Naive thymus-derived CD4-positive, alpha-beta T cell (primary cell): ENCODE measurements at regions of chr1 and their contacts with region 1.

Region 1: DNA sequence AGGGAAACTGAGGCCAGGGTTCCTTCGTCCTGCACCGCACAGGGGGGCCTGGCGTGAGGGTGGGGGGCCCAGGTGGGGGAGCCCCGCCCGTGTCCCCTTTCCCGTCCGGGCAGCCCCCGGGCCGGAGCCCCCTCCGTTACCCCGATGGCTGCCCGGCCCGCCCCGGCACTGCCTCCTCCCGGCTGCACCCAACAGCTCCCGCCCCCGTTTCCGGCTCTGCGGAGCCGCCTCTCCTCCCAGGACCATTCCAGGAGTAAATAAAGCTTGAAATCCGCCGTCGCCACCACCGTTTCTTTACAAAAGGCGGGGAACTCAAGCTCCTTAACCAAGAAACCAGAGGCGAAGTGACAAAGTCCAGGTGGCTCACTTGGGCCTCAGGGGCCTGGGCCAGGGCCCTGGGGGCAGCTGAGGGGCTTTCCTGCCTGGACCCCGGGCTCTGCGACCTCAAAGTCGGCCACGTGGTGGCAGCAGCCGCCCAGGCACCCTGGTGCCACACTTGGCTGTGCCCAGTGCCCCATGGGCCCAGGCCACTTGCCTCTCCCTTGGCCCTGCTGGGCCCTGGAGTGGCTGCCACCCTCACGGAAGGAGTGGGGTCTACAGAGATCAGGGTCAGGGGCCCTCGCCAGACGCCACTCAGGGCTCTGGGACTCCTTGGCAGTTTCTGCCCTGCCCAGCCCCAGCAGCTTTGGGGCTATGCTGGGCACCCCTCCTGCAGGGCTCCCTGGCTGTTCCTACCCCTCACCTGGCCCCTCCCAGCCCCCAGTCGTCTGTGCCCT is 514 bp upstream of the FAAP20 start:
- DNase-seq: peak; percentile 85 to 98 (median 95)
- ATAC-seq: peak; percentile 85
- H3K4me3 ChIP-seq: peak overlapping the region; percentile 89
- H3K4me3 Mint-ChIP-seq: peak overlapping the region; percentile 71 to 91 (median 86)
- H3K27ac ChIP-seq: peak overlapping the region; percentile 88
- H3K27ac Mint-ChIP-seq: peak overlapping the region; percentile 52 to 94 (median 92)
- H3K4me1 ChIP-seq: peaks cover 22 to 33% of the 10 kb centered on the region in 2 donors
- H3K4me1 Mint-ChIP-seq: peaks cover 15 to 34% (median 26%) of the 10 kb centered on the region in 7 donors
- H3K27me3 ChIP-seq: no peaks in the 10 kb centered on the region
- H3K27me3 Mint-ChIP-seq: no peaks in the 10 kb centered on the region

Region 2: GRCh38 chr1:2133039-2133878 is 61.8 kb before region 1 on chr1:
- CTCF ChIA-PET with region 1: no interaction called
- POLR2A ChIA-PET with region 1: interaction called, 3 read pairs
- intact Hi-C with region 1: loop called in 1 of 2 experiments (anchors 1 kb)
- DNase-seq: peak; percentile 93 to 97 (median 96)
- ATAC-seq: peak; percentile 94
- H3K4me3 ChIP-seq: peak overlapping the region; percentile 66
- H3K4me3 Mint-ChIP-seq: peak overlapping the region; percentile 73 to 88 (median 83)
- H3K27ac ChIP-seq: peak overlapping the region; percentile 80
- H3K27ac Mint-ChIP-seq: peak overlapping the region; percentile 54 to 96 (median 93)
- H3K4me1 ChIP-seq: peaks cover 10% of the 10 kb centered on the region in 2 donors
- H3K4me1 Mint-ChIP-seq: peaks cover 5 to 32% (median 17%) of the 10 kb centered on the region in 7 donors
- H3K27me3 ChIP-seq: no peaks in the 10 kb centered on the region
- H3K27me3 Mint-ChIP-seq: no peaks in the 10 kb centered on the region

Region 3: GRCh38 chr1:2233997-2234761 is 39.1 kb after region 1 on chr1:
- CTCF ChIA-PET with region 1: interaction called, 5 read pairs
- POLR2A ChIA-PET with region 1: interaction called, 47 read pairs
- intact Hi-C with region 1: loop called in 1 of 2 experiments (anchors 1 kb)
- DNase-seq: peak; percentile 52 to 82 (median 72)
- ATAC-seq: peak; percentile 80
- H3K4me3 ChIP-seq: peak overlapping the region; percentile 83
- H3K4me3 Mint-ChIP-seq: peak overlapping the region; percentile 89 to 100 (median 94)
- H3K27ac ChIP-seq: peak overlapping the region; percentile 78
- H3K27ac Mint-ChIP-seq: peak overlapping the region; percentile 90 to 99 (median 97)
- H3K4me1 ChIP-seq: peaks cover 64 to 78% of the 10 kb centered on the region in 2 donors
- H3K4me1 Mint-ChIP-seq: peaks cover 50 to 70% (median 61%) of the 10 kb centered on the region in 7 donors
- H3K27me3 ChIP-seq: no peaks in the 10 kb centered on the region
- H3K27me3 Mint-ChIP-seq: no peaks in the 10 kb centered on the region

Region 4: DNA sequence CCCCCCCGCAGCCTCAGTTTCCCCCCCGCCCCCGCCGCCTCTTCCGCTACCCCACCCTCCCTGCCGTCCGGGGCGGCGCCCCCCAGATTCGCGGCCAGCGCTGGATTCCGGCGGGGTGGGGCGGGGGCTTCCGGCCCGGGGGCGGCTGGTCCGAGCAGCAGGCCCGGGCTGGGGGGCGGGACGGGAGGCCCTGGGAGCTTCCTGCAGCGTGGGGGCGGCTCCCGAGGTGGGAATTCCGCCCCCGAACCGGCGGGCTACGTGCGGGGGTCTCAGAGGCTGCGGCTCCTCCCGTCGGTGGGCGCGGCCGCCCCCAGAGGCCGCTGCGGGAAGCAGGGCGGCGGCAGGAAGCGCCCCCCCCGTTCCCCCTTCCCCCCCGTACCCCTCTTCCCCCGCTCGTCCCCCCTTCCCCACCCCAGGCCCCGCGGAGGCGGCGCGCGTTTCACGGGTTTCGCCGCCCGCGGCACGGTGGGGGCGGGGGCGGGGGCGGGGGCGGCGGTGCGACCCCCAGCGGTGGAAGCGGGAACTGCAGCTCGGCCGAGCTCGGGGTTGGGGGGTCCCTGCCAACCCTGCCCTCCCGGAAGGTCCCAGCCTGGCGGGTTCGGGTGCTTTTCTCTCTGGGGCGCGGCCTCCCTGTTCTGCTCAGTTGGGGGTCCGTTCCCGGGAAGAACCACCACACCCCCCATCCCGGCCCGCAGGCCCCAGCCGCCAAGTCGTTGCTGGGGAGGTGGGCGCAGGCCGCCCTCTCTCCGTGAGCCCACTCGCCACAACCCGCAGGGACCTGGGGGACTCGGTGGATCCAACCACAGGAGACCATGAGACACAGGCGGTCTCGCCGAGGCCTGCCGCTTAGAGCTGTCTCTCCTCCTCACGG is 120.0 kb after region 1 on chr1:
- CTCF ChIA-PET with region 1: interaction called, 20 read pairs
- POLR2A ChIA-PET with region 1: interaction called, 11 read pairs
- intact Hi-C with region 1: loop called in 1 of 2 experiments (anchors 1 kb)
- DNase-seq: peak; percentile 56 to 77 (median 70)
- ATAC-seq: peak; percentile 81
- H3K4me3 ChIP-seq: peak overlapping the region; percentile 55
- H3K4me3 Mint-ChIP-seq: peak overlapping the region in 9 of 10 donors; percentile 12 to 73 (median 64)
- H3K27ac ChIP-seq: peak overlapping the region; percentile 84
- H3K27ac Mint-ChIP-seq: peak overlapping the region in 8 of 9 donors; percentile 38 to 86 (median 65)
- H3K4me1 ChIP-seq: peaks cover 29 to 42% of the 10 kb centered on the region in 2 donors
- H3K4me1 Mint-ChIP-seq: peaks cover 3 to 19% (median 12%) of the 10 kb centered on the region in 7 donors
- H3K27me3 ChIP-seq: no peaks in the 10 kb centered on the region
- H3K27me3 Mint-ChIP-seq: no peaks in the 10 kb centered on the region

Region 5: DNA sequence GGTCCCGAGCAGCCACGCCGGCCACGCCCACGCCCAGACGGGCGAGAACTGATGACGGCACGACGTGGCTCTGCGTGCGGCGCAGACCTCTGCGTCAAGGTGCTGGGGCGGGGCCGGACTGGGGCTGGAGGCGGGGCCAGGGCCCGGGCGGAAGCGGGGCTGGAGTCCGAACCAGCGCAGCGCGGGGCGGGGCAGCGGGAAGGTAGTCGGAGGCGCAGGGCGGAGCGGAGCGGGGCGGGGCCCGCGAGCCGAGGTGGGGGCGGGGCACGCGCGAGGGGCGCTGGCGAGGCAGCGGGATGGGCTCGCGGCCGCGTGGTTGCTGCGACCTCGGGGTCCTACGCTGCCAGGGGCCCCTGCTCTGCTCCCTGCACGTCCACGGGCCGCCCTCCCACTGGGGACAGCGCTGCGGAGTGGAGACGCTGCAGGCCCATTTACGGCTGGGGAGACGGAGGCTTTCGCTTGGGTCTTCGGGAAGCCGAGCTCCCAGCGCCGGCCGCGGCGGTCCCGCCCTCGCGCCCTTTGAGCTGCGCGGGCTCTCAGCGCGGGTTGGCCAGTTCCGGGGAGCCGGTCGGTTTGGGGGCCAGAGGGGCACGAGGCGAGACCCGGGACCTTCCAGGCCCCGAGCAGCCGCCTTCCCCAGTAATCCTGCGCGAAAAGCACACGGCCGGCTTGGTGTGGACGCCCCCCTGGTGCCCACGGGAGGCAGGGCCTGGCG is 217.6 kb after region 1 on chr1 and contains the start of gene PEX10:
- CTCF ChIA-PET with region 1: no interaction called
- POLR2A ChIA-PET with region 1: interaction called, 3 read pairs
- intact Hi-C with region 1: loop called in 1 of 2 experiments (anchors 1 kb)
- DNase-seq: peak; percentile 95 to 100 (median 98)
- ATAC-seq: peak; percentile 97
- H3K4me3 ChIP-seq: peak within 1 kb of the TSS; percentile 71
- H3K4me3 Mint-ChIP-seq: peak within 1 kb of the TSS; percentile 83 to 91 (median 86)
- H3K27ac ChIP-seq: peak within 1 kb of the TSS; percentile 95
- H3K27ac Mint-ChIP-seq: peak within 1 kb of the TSS; percentile 31 to 94 (median 87)
- H3K4me1 ChIP-seq: peaks cover 37 to 45% of the 10 kb centered on the region in 2 donors
- H3K4me1 Mint-ChIP-seq: peaks cover 27 to 45% (median 35%) of the 10 kb centered on the region in 7 donors
- H3K27me3 ChIP-seq: no peaks in the 10 kb centered on the region
- H3K27me3 Mint-ChIP-seq: no peaks in the 10 kb centered on the region
- total RNA-seq, gene PEX10: 8.7 to 14.9 (median 12.3) TPM

Region 6: GRCh38 chr1:2586154-2587070 is 391.3 kb after region 1 on chr1 and contains the start of gene PRXL2B:
- CTCF ChIA-PET with region 1: no interaction called
- POLR2A ChIA-PET with region 1: interaction called, 13 read pairs
- intact Hi-C with region 1: loop called in 1 of 2 experiments (anchors 2 kb)
- DNase-seq: peak; percentile 90 to 100 (median 96)
- ATAC-seq: peak; percentile 86
- H3K4me3 ChIP-seq: peak within 1 kb of the TSS; percentile 78
- H3K4me3 Mint-ChIP-seq: peak within 1 kb of the TSS; percentile 81 to 96 (median 92)
- H3K27ac ChIP-seq: peak within 1 kb of the TSS; percentile 87
- H3K27ac Mint-ChIP-seq: peak within 1 kb of the TSS; percentile 87 to 99 (median 96)
- H3K4me1 ChIP-seq: peaks cover 27 to 30% of the 10 kb centered on the region in 2 donors
- H3K4me1 Mint-ChIP-seq: peaks cover 24 to 45% (median 38%) of the 10 kb centered on the region in 7 donors
- H3K27me3 ChIP-seq: no peaks in the 10 kb centered on the region
- H3K27me3 Mint-ChIP-seq: no peaks in the 10 kb centered on the region
- total RNA-seq, gene PRXL2B: 12.3 to 37.0 (median 26.7) TPM

Region 7: DNA sequence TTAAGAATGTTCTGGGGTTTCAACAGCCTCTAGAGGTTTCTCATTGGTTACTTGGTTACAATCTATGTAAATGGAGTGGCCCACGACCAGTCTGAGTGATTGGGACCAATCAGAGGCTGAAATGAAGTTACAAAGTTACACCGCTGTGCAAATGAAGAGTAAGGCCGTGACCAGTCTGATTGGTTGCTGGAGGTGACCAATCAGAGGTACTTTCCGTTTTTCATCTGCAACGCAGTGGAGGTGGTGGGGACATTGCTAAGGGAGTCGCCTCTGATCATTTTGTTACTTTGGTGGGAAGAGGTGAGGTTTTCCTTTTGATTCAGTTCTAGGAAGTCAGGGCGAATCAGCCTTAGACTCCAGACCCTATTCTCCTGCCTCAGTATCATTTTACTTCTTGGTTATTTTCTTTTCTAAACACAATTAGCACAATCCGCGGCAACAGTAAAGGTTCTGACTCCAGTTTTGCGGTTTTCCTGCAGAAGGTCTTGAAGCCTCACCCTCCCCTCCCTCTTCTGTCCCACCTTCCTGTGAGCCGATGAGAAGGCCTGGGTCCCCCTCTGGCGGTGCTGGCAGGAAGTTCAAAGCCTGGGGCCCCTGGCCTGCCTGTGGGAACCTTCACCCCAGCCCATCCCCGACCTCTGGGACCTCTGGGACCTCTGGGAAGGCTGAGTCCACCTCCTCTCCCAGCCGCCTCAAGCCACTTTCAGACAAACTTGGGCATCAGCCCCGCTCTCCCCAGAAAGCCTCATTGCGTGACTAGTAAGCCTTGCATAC is 645.1 kb after region 1 on chr1:
- CTCF ChIA-PET with region 1: interaction called, 3 read pairs
- POLR2A ChIA-PET with region 1: no interaction called
- intact Hi-C with region 1: loop called in 1 of 2 experiments (anchors 1 kb)
- DNase-seq: peak in 8 of 9 donors; percentile 43 to 87 (median 82)
- ATAC-seq: peak; percentile 89
- H3K4me3 ChIP-seq: peak overlapping the region; percentile 31
- H3K4me3 Mint-ChIP-seq: peak overlapping the region; percentile 49 to 88 (median 78)
- H3K27ac ChIP-seq: peak overlapping the region; percentile 60
- H3K27ac Mint-ChIP-seq: peak overlapping the region; percentile 40 to 92 (median 90)
- H3K4me1 ChIP-seq: peaks cover 10 to 17% of the 10 kb centered on the region in 2 donors
- H3K4me1 Mint-ChIP-seq: peaks cover 11 to 24% (median 23%) of the 10 kb centered on the region in 7 donors
- H3K27me3 ChIP-seq: no peaks in the 10 kb centered on the region
- H3K27me3 Mint-ChIP-seq: peaks cover 0 to 4% (median 0%) of the 10 kb centered on the region in 5 donors